Activated B cell treated with CpG ODN at 0.5 μM for 24 hours (primary cell): ENCODE measurements at regions of chr16 and their contacts with region 1.

Region 1: GRCh38 chr16:50741808-50742575 is at the start of gene CYLD:
- DNase-seq: peak; percentile 96
- ATAC-seq: peak; percentile 87
- H3K4me3 Mint-ChIP-seq: peak within 1 kb of the TSS; percentile 91
- H3K27ac Mint-ChIP-seq: peak within 1 kb of the TSS; percentile 96
- H3K4me1 Mint-ChIP-seq: peaks cover 58% of the 10 kb centered on the region
- H3K27me3 Mint-ChIP-seq: no peaks in the 10 kb centered on the region
- CTCF ChIP-seq: no peak
- total RNA-seq, gene CYLD: 116 and 122 TPM in 2 replicates

Region 2: DNA sequence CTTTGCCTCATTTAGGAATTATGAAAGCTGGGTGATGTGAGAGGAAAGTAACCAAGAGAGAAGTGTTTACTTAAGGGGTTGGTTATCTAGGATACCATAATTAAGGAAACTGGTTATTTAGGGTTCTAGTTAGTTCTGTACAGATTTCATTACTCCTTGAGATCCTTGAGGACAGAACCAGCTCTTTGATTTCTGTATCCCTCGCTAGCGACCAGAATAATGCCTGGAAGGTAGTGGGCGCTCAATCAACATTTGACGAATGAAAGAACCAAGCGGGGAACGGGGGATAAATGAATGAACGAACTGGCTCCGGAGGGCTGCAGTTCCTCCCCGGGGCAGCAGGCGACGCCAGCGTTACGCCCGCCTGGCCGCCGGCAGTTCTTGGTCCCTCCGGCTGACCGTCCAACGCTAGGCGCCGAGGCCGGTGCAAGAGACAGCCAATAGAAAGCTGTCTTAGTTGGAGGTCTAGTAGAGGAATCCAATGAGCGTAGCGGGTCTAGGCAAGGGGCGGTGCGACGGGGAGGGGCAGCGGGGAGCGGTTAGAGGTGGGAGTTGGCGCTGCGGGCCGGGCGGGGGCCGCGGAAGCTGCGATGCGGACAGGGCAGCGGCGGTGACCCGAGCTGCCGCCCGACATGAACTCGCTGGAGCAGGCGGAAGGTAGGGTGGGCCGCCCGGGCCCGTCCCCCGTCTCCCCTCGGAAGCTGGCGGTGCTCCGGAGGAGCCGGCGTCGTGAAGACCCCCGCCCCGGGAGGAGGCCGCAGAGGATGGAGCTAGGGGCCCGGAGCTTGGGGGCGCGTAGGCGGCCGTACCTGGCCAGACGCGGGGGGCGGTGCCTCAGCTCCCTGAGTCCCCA is 717.1 kb before region 1 on chr16 and contains the start of gene CNEP1R1:
- CTCF ChIA-PET with region 1: interaction called, 3 read pairs
- POLR2A ChIA-PET with region 1: interaction called, 6 read pairs
- intact Hi-C with region 1: loop called (anchors 1 kb)
- DNase-seq: peak; percentile 87
- ATAC-seq: peak; percentile 95
- H3K4me3 Mint-ChIP-seq: peak within 1 kb of the TSS; percentile 96
- H3K27ac Mint-ChIP-seq: peak within 1 kb of the TSS; percentile 83
- H3K4me1 Mint-ChIP-seq: peaks cover 19% of the 10 kb centered on the region
- H3K27me3 Mint-ChIP-seq: peaks cover 6% of the 10 kb centered on the region
- CTCF ChIP-seq: peak; percentile 82
- total RNA-seq, gene CNEP1R1: 22.1 and 31.0 TPM in 2 replicates

Region 3: GRCh38 chr16:50273681-50274325 is 468.2 kb before region 1 on chr16:
- CTCF ChIA-PET with region 1: no interaction called
- POLR2A ChIA-PET with region 1: interaction called, 3 read pairs
- intact Hi-C with region 1: loop called (anchors 2 kb)
- DNase-seq: no peak
- ATAC-seq: peak; percentile 82
- H3K4me3 Mint-ChIP-seq: peak overlapping the region; percentile 99
- H3K27ac Mint-ChIP-seq: peak overlapping the region; percentile 100
- H3K4me1 Mint-ChIP-seq: peaks cover 92% of the 10 kb centered on the region
- H3K27me3 Mint-ChIP-seq: no peaks in the 10 kb centered on the region
- CTCF ChIP-seq: no peak

Region 4: DNA sequence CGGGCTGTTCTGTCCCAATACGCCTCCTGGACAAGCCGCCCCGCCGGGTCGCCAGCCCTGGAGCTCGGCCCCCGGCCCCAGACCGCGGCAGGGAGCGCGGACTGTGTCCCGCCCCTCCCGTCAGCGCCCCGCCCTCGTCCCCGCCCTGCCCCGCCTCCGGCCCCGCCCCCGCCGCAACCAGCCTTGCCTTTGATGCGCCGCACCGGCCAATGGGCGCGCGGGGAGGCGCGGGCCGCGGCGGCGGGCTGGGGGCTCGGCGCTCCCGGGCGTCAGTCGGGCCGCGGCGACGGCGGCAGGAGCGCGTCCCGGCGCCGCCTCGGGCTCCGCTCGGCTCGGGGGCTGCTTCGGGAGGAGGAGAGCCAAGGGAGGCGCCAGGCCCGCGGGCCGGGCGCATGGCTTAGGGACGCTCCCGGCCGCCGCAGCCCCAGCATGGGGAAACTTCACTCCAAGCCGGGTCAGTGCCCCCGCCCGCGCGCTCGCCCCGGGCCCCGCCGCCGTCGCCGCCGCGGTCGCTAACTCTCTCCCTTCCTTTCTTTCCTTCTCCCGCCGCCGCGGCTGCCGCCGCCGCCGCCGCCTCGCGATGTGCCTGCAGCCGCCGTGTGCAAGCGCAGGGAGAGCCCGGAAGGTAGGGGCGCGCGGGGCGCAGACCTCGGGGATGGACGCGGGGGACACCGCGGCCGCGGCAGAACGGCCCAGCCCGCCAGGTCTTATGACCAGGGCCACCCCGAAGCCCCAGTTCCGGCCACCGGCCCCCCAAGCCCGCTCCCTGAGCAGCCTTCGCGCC is 193.7 kb before region 1 on chr16 and contains the start of gene NKD1:
- CTCF ChIA-PET with region 1: interaction called, 3 read pairs
- POLR2A ChIA-PET with region 1: interaction called, 4 read pairs
- intact Hi-C with region 1: loop called (anchors 1 kb)
- DNase-seq: peak; percentile 72
- ATAC-seq: peak; percentile 88
- H3K4me3 Mint-ChIP-seq: peak within 1 kb of the TSS; percentile 91
- H3K27ac Mint-ChIP-seq: peak within 1 kb of the TSS; percentile 70
- H3K4me1 Mint-ChIP-seq: peaks cover 7% of the 10 kb centered on the region
- H3K27me3 Mint-ChIP-seq: peaks cover 10% of the 10 kb centered on the region
- CTCF ChIP-seq: no peak
- total RNA-seq, gene NKD1: 0.49 and 1.5 TPM in 2 replicates

Region 5: GRCh38 chr16:50665128-50665878 is 76.7 kb before region 1 on chr16:
- CTCF ChIA-PET with region 1: interaction called, 169 read pairs
- POLR2A ChIA-PET with region 1: interaction called, 19 read pairs
- intact Hi-C with region 1: loop called (anchors 1 kb)
- DNase-seq: peak; percentile 68
- ATAC-seq: peak; percentile 70
- H3K4me3 Mint-ChIP-seq: peak overlapping the region; percentile 81
- H3K27ac Mint-ChIP-seq: peak overlapping the region; percentile 65
- H3K4me1 Mint-ChIP-seq: peaks cover 23% of the 10 kb centered on the region
- H3K27me3 Mint-ChIP-seq: no peaks in the 10 kb centered on the region
- CTCF ChIP-seq: no peak

Region 6: GRCh38 chr16:50696575-50697420 is 45.2 kb before region 1 on chr16:
- CTCF ChIA-PET with region 1: no interaction called
- POLR2A ChIA-PET with region 1: interaction called, 10 read pairs
- intact Hi-C with region 1: loop called (anchors 1 kb)
- DNase-seq: no peak
- ATAC-seq: no peak
- H3K4me3 Mint-ChIP-seq: no peak overlapping the region
- H3K27ac Mint-ChIP-seq: peak overlapping the region; percentile 87
- H3K4me1 Mint-ChIP-seq: peaks cover 76% of the 10 kb centered on the region
- H3K27me3 Mint-ChIP-seq: peaks cover 4% of the 10 kb centered on the region
- CTCF ChIP-seq: no peak

Region 7: GRCh38 chr16:50791522-50791921 is 49.5 kb after region 1 on chr16:
- CTCF ChIA-PET with region 1: no interaction called
- POLR2A ChIA-PET with region 1: no interaction called
- intact Hi-C with region 1: no loop called
- DNase-seq: no peak
- ATAC-seq: no peak
- H3K4me3 Mint-ChIP-seq: no peak overlapping the region
- H3K27ac Mint-ChIP-seq: no peak overlapping the region
- H3K4me1 Mint-ChIP-seq: no peaks in the 10 kb centered on the region
- H3K27me3 Mint-ChIP-seq: no peaks in the 10 kb centered on the region
- CTCF ChIP-seq: no peak

Region 8: GRCh38 chr16:50902457-50902856 is 160.5 kb after region 1 on chr16:
- CTCF ChIA-PET with region 1: no interaction called
- POLR2A ChIA-PET with region 1: no interaction called
- intact Hi-C with region 1: no loop called
- DNase-seq: no peak
- ATAC-seq: no peak
- H3K4me3 Mint-ChIP-seq: no peak overlapping the region
- H3K27ac Mint-ChIP-seq: no peak overlapping the region
- H3K4me1 Mint-ChIP-seq: no peaks in the 10 kb centered on the region
- H3K27me3 Mint-ChIP-seq: no peaks in the 10 kb centered on the region
- CTCF ChIP-seq: no peak